Ascending aorta (tissue), 2 donors: ENCODE measurements at regions of chr10 and their contacts with region 1.

Region 1: GRCh38 chr10:112949875-112950507 is at the start of gene TCF7L2:
- DNase-seq: peak; percentile 92 to 98
- H3K4me3 ChIP-seq: peak within 1 kb of the TSS; percentile 81 to 83
- H3K27ac ChIP-seq: peak within 1 kb of the TSS; percentile 90 to 92
- H3K4me1 ChIP-seq: peaks cover 0 to 27% of the 10 kb centered on the region in 2 donors
- H3K27me3 ChIP-seq: no peaks in the 10 kb centered on the region
- CTCF ChIP-seq: no peak
- total RNA-seq, gene TCF7L2: 8.2 TPM

Region 2: DNA sequence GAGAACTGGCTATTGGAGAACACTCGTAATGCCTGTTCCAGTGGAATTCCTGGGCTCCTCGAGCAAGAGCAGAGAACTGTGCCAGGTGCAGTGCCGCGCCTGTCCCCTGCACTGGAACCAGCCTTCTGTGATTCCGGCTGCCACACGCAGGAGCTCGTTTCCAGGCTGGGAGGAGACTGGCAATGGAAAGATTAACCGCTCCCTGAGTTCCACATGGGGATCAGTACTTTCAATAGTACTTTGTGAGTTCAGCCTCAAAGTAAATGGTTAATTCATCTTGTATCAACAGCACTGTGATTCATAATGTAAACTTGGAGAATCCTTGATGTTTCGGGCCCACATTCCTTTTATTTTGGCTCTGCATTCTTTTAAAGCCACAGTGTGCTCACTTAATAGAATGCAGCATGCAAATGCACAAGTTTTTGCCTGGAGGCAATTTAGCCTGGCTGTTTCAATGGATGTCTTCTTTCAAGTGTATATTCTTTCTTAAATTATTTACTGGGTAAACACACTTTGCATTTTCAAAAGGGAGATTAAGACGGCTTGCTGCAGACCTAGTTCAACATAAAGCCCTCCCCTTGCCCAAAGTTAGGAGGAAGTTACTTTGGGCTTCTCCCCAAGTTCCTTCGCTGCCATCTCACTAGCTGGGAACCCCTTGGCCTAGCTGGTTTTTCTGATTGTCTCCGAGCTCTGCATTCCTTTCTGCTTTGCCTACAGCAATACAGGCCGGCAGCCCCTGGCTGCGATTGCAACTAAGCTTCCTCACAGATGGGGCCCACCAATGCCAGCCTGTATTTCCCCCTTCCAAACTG is 138.0 kb before region 1 on chr10:
- intact Hi-C with region 1: loop called (anchors 2 kb)
- DNase-seq: peak; percentile 32 to 90
- H3K4me3 ChIP-seq: no peak overlapping the region
- H3K27ac ChIP-seq: peak overlapping the region; percentile 29 to 56
- H3K4me1 ChIP-seq: peaks cover 4 to 15% of the 10 kb centered on the region in 2 donors
- H3K27me3 ChIP-seq: no peaks in the 10 kb centered on the region
- CTCF ChIP-seq: no peak

Region 3: GRCh38 chr10:113027574-113028455 is 77.8 kb after region 1 on chr10:
- intact Hi-C with region 1: loop called (anchors 2 kb)
- DNase-seq: no peak
- H3K4me3 ChIP-seq: peak overlapping the region; percentile 25 to 29
- H3K27ac ChIP-seq: peak overlapping the region; percentile 66 to 81
- H3K4me1 ChIP-seq: peaks cover 12 to 56% of the 10 kb centered on the region in 2 donors
- H3K27me3 ChIP-seq: no peaks in the 10 kb centered on the region
- CTCF ChIP-seq: no peak

Region 4: DNA sequence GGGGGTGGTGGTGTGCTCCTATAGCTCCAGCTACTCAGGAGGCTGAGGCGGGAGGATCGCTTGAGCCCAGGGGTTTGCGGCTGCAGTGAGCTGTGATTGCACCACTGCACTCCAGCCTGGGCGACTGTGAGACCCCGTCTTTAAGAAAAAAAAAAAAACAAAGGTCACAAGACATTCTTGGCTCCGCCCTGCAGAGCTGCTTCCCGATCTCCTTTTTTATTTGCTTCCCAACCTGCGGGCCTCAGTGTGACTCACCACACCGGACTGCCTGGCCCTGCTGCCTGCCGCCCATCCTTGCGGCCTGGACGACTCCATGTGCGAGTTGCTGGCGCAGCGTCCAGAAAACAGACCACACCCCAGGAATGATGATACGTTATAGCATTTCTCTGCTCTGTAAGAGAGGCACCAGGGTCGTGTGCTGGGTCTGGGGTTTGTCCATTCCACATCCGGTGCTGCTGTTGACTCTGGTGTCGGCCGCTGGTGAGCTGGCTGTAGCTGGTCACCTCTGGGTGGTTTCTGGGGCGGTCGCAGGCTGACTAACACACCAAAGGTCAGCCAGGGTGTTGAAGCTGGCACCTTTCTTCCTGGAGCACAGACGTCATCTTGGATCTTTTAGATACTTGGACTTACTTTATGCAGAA is 123.7 kb after region 1 on chr10:
- intact Hi-C with region 1: loop called (anchors 5 kb)
- DNase-seq: peak; percentile 69 to 96
- H3K4me3 ChIP-seq: peak overlapping the region in 1 of 2 donors; percentile 19
- H3K27ac ChIP-seq: peak overlapping the region; percentile 83 to 87
- H3K4me1 ChIP-seq: peaks cover 11 to 36% of the 10 kb centered on the region in 2 donors
- H3K27me3 ChIP-seq: no peaks in the 10 kb centered on the region
- CTCF ChIP-seq: no peak

Region 5: GRCh38 chr10:113126229-113127201 is 176.5 kb after region 1 on chr10:
- intact Hi-C with region 1: loop called (anchors 2 kb)
- DNase-seq: peak in 1 of 2 donors; percentile 85
- H3K4me3 ChIP-seq: peak overlapping the region; percentile 55 to 61
- H3K27ac ChIP-seq: no peak overlapping the region
- H3K4me1 ChIP-seq: peaks cover 0 to 6% of the 10 kb centered on the region in 2 donors
- H3K27me3 ChIP-seq: no peaks in the 10 kb centered on the region
- CTCF ChIP-seq: peak; percentile 35 to 87 (median 36)